ENCODE measurements at regions of chr2 and their contacts with region 1.

Region 1: GRCh38 chr2:57396355-57397098 is 650.1 kb upstream of the VRK2 start:
- DNase-seq: peak; percentile 52
- H3K4me3 ChIP-seq: no peak overlapping the region
- H3K27ac ChIP-seq: no peak overlapping the region
- H3K4me1 ChIP-seq: no peaks in the 10 kb centered on the region
- H3K27me3 ChIP-seq: no peaks in the 10 kb centered on the region
- CTCF ChIP-seq: no peak
- EP300 ChIP-seq: no peak
- POLR2A ChIP-seq: no peak

Region 2: GRCh38 chr2:56244911-56245530 is 1151.5 kb before region 1 on chr2:
- intact Hi-C with region 1: loop called (anchors 10 kb)
- DNase-seq: no peak
- H3K4me3 ChIP-seq: no peak overlapping the region
- H3K27ac ChIP-seq: no peak overlapping the region
- H3K4me1 ChIP-seq: no peaks in the 10 kb centered on the region
- H3K27me3 ChIP-seq: no peaks in the 10 kb centered on the region
- CTCF ChIP-seq: no peak
- EP300 ChIP-seq: no peak
- POLR2A ChIP-seq: no peak

Region 3: GRCh38 chr2:56981554-56981953 is 415.0 kb before region 1 on chr2:
- intact Hi-C with region 1: no loop called
- DNase-seq: no peak
- H3K4me3 ChIP-seq: no peak overlapping the region
- H3K27ac ChIP-seq: no peak overlapping the region
- H3K4me1 ChIP-seq: no peaks in the 10 kb centered on the region
- H3K27me3 ChIP-seq: no peaks in the 10 kb centered on the region
- CTCF ChIP-seq: no peak
- EP300 ChIP-seq: no peak
- POLR2A ChIP-seq: no peak